Natural killer cell (primary cell): ENCODE measurements at regions of chr6 and their contacts with region 1.

Region 1: GRCh38 chr6:24581084-24581669 is 64.8 kb downstream of the KIAA0319 start:
- DNase-seq: peak; percentile 62 to 87
- ATAC-seq: peak; percentile 76 to 89 (median 88)
- H3K4me3 ChIP-seq: no peak overlapping the region
- H3K4me3 Mint-ChIP-seq: no peak overlapping the region
- H3K27ac ChIP-seq: no peak overlapping the region
- H3K27ac Mint-ChIP-seq: no peak overlapping the region
- H3K4me1 ChIP-seq: no peaks in the 10 kb centered on the region
- H3K4me1 Mint-ChIP-seq: peaks cover 9% of the 10 kb centered on the region in 2 donors
- H3K27me3 ChIP-seq: no peaks in the 10 kb centered on the region
- H3K27me3 Mint-ChIP-seq: peaks cover 4 to 17% of the 10 kb centered on the region in 2 donors
- CTCF ChIP-seq: peak; percentile 63

Region 2: GRCh38 chr6:24689964-24690363 is 108.8 kb after region 1 on chr6:
- intact Hi-C with region 1: loop called (anchors 1 kb)
- DNase-seq: no peak
- ATAC-seq: no peak
- H3K4me3 ChIP-seq: no peak overlapping the region
- H3K4me3 Mint-ChIP-seq: no peak overlapping the region
- H3K27ac ChIP-seq: no peak overlapping the region
- H3K27ac Mint-ChIP-seq: no peak overlapping the region
- H3K4me1 ChIP-seq: no peaks in the 10 kb centered on the region
- H3K4me1 Mint-ChIP-seq: peaks cover 0 to 5% of the 10 kb centered on the region in 2 donors
- H3K27me3 ChIP-seq: no peaks in the 10 kb centered on the region
- H3K27me3 Mint-ChIP-seq: no peaks in the 10 kb centered on the region
- CTCF ChIP-seq: no peak

Region 3: DNA sequence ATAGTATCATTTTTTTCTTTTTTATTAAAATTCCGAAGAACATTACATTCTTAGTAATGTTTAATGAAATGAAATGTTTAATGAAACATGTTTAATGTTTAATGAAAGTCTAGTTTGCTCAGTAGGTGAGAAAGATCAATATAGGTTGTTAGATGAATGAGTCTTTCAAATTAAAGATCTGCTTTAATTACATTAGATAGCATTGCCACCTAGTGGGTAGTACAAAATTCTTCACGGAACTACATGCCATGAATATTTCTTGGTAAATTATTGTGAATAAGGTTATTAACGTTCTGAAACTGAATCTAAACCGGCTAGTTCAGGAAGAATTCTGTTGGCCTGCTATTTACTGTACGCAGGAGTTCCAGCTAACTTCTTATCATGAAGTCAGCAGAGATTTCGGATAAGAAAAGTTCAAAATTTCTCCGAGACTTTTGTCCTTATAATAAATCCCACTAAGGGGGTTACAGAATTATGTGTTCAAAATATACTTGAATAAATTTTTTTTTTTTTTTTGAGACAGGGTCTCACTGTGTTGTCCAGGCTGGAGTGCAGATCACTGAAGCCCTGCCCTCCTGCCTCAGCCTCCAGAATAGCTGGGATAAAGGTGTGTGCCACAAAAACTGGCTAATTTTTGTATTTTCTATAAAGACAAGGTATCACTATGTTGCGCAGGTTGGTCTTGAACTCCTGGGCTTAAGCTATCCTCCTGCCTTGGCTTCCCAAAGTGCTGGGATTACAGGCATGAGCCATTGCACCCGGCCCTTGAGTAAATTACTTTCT is 185.7 kb after region 1 on chr6:
- intact Hi-C with region 1: loop called (anchors 1 kb)
- DNase-seq: peak in 1 of 2 donors; percentile 57
- ATAC-seq: peak; percentile 48 to 69 (median 66)
- H3K4me3 ChIP-seq: no peak overlapping the region
- H3K4me3 Mint-ChIP-seq: no peak overlapping the region
- H3K27ac ChIP-seq: no peak overlapping the region
- H3K27ac Mint-ChIP-seq: no peak overlapping the region
- H3K4me1 ChIP-seq: no peaks in the 10 kb centered on the region
- H3K4me1 Mint-ChIP-seq: no peaks in the 10 kb centered on the region
- H3K27me3 ChIP-seq: no peaks in the 10 kb centered on the region
- H3K27me3 Mint-ChIP-seq: no peaks in the 10 kb centered on the region
- CTCF ChIP-seq: peak; percentile 36

Region 4: DNA sequence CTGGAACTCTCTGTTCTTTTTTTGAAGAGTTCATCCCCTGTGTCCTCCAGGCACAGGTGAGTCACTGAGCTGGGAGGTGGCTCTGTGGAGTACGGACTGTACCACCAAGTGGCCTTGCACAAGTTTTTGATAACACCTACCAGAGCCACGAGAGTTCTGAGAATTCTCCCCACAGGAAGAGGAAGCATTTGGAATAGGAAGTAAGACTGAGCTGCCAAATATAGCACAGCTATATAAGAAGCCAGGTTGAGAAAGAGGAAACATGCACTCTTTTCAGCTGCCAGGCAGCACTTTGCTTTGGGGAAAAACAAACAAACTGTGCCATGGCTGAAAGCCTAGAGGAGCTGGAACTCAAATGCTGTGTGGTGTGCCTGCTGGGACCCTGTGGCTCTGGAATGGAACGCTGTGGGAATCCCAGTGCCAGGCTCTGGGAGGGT is 425.4 kb after region 1 on chr6:
- intact Hi-C with region 1: no loop called
- DNase-seq: peak in 1 of 2 donors; percentile 62
- ATAC-seq: peak; percentile 21 to 78 (median 34)
- H3K4me3 ChIP-seq: no peak overlapping the region
- H3K4me3 Mint-ChIP-seq: peak overlapping the region; percentile 83
- H3K27ac ChIP-seq: peak overlapping the region; percentile 86
- H3K27ac Mint-ChIP-seq: peak overlapping the region; percentile 91 to 95
- H3K4me1 ChIP-seq: peaks cover 51% of the 10 kb centered on the region
- H3K4me1 Mint-ChIP-seq: peaks cover 74 to 81% of the 10 kb centered on the region in 2 donors
- H3K27me3 ChIP-seq: no peaks in the 10 kb centered on the region
- H3K27me3 Mint-ChIP-seq: no peaks in the 10 kb centered on the region
- CTCF ChIP-seq: no peak

Region 5: GRCh38 chr6:25017932-25018567 is 436.9 kb after region 1 on chr6:
- intact Hi-C with region 1: loop called (anchors 5 kb)
- DNase-seq: peak; percentile 69 to 92
- ATAC-seq: peak; percentile 94 to 97 (median 97)
- H3K4me3 ChIP-seq: no peak overlapping the region
- H3K4me3 Mint-ChIP-seq: no peak overlapping the region
- H3K27ac ChIP-seq: no peak overlapping the region
- H3K27ac Mint-ChIP-seq: peak overlapping the region; percentile 76 to 84
- H3K4me1 ChIP-seq: peaks cover 9% of the 10 kb centered on the region
- H3K4me1 Mint-ChIP-seq: peaks cover 23 to 30% of the 10 kb centered on the region in 2 donors
- H3K27me3 ChIP-seq: no peaks in the 10 kb centered on the region
- H3K27me3 Mint-ChIP-seq: no peaks in the 10 kb centered on the region
- CTCF ChIP-seq: peak; percentile 88

Region 6: GRCh38 chr6:25070547-25071366 is 489.6 kb after region 1 on chr6:
- intact Hi-C with region 1: loop called (anchors 1 kb)
- DNase-seq: peak; percentile 73 to 94
- ATAC-seq: peak; percentile 96 to 100 (median 99)
- H3K4me3 ChIP-seq: peak overlapping the region; percentile 11
- H3K4me3 Mint-ChIP-seq: peak overlapping the region; percentile 55
- H3K27ac ChIP-seq: peak overlapping the region; percentile 60
- H3K27ac Mint-ChIP-seq: peak overlapping the region; percentile 82 to 85
- H3K4me1 ChIP-seq: peaks cover 3% of the 10 kb centered on the region
- H3K4me1 Mint-ChIP-seq: peaks cover 6 to 16% of the 10 kb centered on the region in 2 donors
- H3K27me3 ChIP-seq: no peaks in the 10 kb centered on the region
- H3K27me3 Mint-ChIP-seq: no peaks in the 10 kb centered on the region
- CTCF ChIP-seq: peak; percentile 89